SK-MEL-5 (cell line): ENCODE measurements at regions of chr7 and their contacts with region 1.

Region 1: GRCh38 chr7:41977151-41977651 is 259.8 kb downstream of the GLI3 start:
- DNase-seq: peak; percentile 81

Region 2: GRCh38 chr7:41399171-41399570 is 578.0 kb before region 1 on chr7:
- in situ Hi-C with region 1: no loop called
- DNase-seq: no peak

Region 3: GRCh38 chr7:42574685-42575084 is 597.5 kb after region 1 on chr7:
- in situ Hi-C with region 1: loop called (anchors 25 kb)
- DNase-seq: peak; percentile 39